ENCODE measurements at regions of chr12 and their contacts with region 1.

Region 1: GRCh38 chr12:94101738-94102660 is 46.4 kb upstream of the PLXNC1 start:
- DNase-seq: peak; percentile 83 to 90 (median 88)
- ATAC-seq: peak; percentile 95
- H3K4me3 ChIP-seq: peak overlapping the region; percentile 63 to 64
- H3K27ac ChIP-seq: peak overlapping the region in 1 of 2 donors; percentile 61
- H3K4me1 ChIP-seq: peaks cover 5 to 16% of the 10 kb centered on the region in 2 donors
- H3K27me3 ChIP-seq: peaks cover 0 to 30% of the 10 kb centered on the region in 2 donors
- CTCF ChIP-seq: peak; percentile 64 to 85

Region 2: DNA sequence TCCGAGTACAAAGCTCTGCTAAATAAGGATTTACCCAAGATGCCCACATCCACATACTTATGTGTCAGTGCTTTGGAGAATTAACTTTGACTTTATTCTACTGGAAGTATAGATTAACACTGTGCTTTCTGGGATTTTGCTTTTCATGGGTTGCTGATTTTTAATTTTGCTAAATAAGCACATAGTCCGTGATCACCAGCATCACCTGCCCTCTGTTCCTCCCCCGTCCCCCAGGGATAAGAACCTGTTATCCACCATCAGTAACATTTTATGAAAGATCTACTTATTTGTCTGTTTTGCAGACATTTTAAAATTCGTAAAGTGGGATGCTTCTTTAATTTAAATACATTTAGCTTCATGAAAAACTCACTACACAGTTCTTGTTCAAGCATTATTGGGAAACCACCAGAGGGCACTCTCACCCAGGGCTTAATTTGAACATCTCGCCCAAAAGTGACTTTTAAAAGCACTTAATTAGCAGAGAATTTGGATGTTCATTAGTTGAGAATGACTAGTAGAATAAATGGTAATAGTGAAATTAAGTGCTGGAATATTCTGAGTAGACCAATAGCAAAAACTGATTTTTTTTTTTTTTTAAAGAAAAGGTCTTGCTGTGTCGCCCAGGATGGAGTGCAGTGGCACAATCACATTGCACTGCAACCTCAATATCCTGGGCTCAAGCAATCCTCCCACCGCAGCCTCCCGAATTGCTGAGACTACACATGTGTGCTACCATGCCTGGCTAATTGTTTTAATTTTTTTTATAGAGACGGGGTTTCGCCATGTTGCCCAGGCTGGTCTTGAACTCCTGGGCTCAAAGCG is 599.0 kb before region 1 on chr12:
- intact Hi-C with region 1: loop called (anchors 5 to 10 kb)
- DNase-seq: peak in 1 of 4 donors; percentile 57
- ATAC-seq: peak; percentile 63
- H3K4me3 ChIP-seq: no peak overlapping the region
- H3K27ac ChIP-seq: no peak overlapping the region
- H3K4me1 ChIP-seq: no peaks in the 10 kb centered on the region
- H3K27me3 ChIP-seq: no peaks in the 10 kb centered on the region
- CTCF ChIP-seq: peak; percentile 57 to 75

Region 3: DNA sequence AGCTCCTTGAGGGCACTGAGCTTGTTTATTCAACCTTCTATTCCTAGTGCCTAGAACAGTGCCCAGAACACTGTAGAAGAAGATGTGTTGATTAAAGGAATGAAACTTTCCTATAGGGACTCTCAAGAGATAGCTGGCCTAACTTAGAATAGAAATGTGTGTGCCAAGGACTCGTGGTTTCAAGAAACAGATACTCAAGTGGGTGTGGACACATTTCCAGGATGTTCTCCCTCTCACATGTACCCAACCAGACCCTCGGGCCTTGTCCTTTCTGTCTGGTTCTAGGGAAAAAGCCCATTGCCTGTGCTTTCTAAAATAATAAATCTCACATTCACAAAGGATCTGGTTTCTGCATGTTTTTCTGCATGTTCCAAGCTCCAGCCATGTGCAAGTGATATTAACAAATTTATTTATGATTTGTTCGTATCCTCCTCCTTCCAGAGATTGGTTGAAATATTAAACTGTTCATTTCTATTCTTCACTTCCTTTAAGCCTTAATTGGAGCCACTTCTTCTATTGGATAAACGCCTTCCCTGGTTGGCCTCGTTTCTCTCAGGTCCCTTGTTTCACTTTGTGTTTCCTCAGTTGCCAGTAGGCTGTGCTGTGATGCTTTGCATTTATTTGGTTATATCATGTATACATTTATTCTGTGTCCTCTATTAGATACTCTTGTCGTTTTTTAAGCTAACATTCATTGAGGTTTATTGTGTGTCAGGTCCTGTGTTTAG is 335.0 kb before region 1 on chr12:
- intact Hi-C with region 1: loop called in 1 of 2 experiments (anchors 5 kb)
- DNase-seq: peak in 1 of 4 donors; percentile 78
- ATAC-seq: peak; percentile 97
- H3K4me3 ChIP-seq: no peak overlapping the region
- H3K27ac ChIP-seq: peak overlapping the region; percentile 33 to 48
- H3K4me1 ChIP-seq: peaks cover 7 to 29% of the 10 kb centered on the region in 2 donors
- H3K27me3 ChIP-seq: no peaks in the 10 kb centered on the region
- CTCF ChIP-seq: peak; percentile 40 to 73

Measured in left lung (tissue), 14 donors.